GM12878 (cell line): ENCODE measurements at regions of chr5 and their contacts with region 1.

Region 1: GRCh38 chr5:160467555-160468362 is 46.1 kb downstream of the PTTG1 start:
- DNase-seq: peak; percentile 96
- ATAC-seq: peak; percentile 80
- H3K4me3 ChIP-seq: peak overlapping the region; percentile 88
- H3K27ac ChIP-seq: peak overlapping the region; percentile 96
- H3K4me1 ChIP-seq: peaks cover 35% of the 10 kb centered on the region
- H3K27me3 ChIP-seq: no peaks in the 10 kb centered on the region
- CTCF ChIP-seq: no peak
- EP300 ChIP-seq: peak; percentile 84 to 95
- POLR2A ChIP-seq: peak; percentile 91
- RAD21 ChIP-seq: peak; percentile 8; the same call in 1 of the 2 replicates

Region 2: GRCh38 chr5:159209438-159210305 is 1258.1 kb before region 1 on chr5 and contains the start of gene RNF145:
- CTCF ChIA-PET with region 1: no interaction called
- POLR2A ChIA-PET with region 1: no interaction called
- RAD21 ChIA-PET with region 1: no interaction called
- SMC1A ChIA-PET with region 1: no interaction called
- in situ Hi-C with region 1: no loop called
- intact Hi-C with region 1: loop called (anchors 10 kb)
- DNase-seq: peak; percentile 62
- ATAC-seq: peak; percentile 71
- H3K4me3 ChIP-seq: peak within 1 kb of the TSS; percentile 79
- H3K27ac ChIP-seq: peak within 1 kb of the TSS; percentile 83
- H3K4me1 ChIP-seq: peaks cover 9% of the 10 kb centered on the region
- H3K27me3 ChIP-seq: no peaks in the 10 kb centered on the region
- CTCF ChIP-seq: no peak
- EP300 ChIP-seq: no peak
- POLR2A ChIP-seq: peak; percentile 87
- RAD21 ChIP-seq: no peak
- polyA plus RNA-seq, gene RNF145: 18.6 to 25.2 TPM

Region 3: GRCh38 chr5:160418561-160419457 is 49.0 kb before region 1 on chr5 and contains the start of gene SLU7:
- CTCF ChIA-PET with region 1: interaction called, 9 read pairs
- POLR2A ChIA-PET with region 1: interaction called, 30 read pairs
- RAD21 ChIA-PET with region 1: interaction called, 68 read pairs
- SMC1A ChIA-PET with region 1: interaction called, 36 read pairs
- in situ Hi-C with region 1: no loop called
- intact Hi-C with region 1: no loop called
- DNase-seq: peak; percentile 91
- ATAC-seq: peak; percentile 80
- H3K4me3 ChIP-seq: peak within 1 kb of the TSS; percentile 72
- H3K27ac ChIP-seq: peak within 1 kb of the TSS; percentile 71
- H3K4me1 ChIP-seq: peaks cover 15% of the 10 kb centered on the region
- H3K27me3 ChIP-seq: no peaks in the 10 kb centered on the region
- CTCF ChIP-seq: no peak
- EP300 ChIP-seq: no peak; a peak in 1 of 4 replicates
- POLR2A ChIP-seq: peak; percentile 86
- RAD21 ChIP-seq: no peak
- polyA plus RNA-seq, gene SLU7: 40.9 to 41.2 TPM

Region 4: GRCh38 chr5:160445132-160445531 is 22.6 kb before region 1 on chr5:
- CTCF ChIA-PET with region 1: interaction called, 230 read pairs
- POLR2A ChIA-PET with region 1: interaction called, 156 read pairs
- RAD21 ChIA-PET with region 1: interaction called, 329 read pairs
- SMC1A ChIA-PET with region 1: interaction called, 511 read pairs
- in situ Hi-C with region 1: no loop called
- intact Hi-C with region 1: loop called (anchors 1 kb)
- DNase-seq: no peak
- ATAC-seq: peak; percentile 37
- H3K4me3 ChIP-seq: no peak overlapping the region
- H3K27ac ChIP-seq: no peak overlapping the region
- H3K4me1 ChIP-seq: peaks cover 62% of the 10 kb centered on the region
- H3K27me3 ChIP-seq: no peaks in the 10 kb centered on the region
- CTCF ChIP-seq: no peak
- EP300 ChIP-seq: peak in 1 of 2 experiments; percentile 39; a peak in 1 of 4 replicates
- POLR2A ChIP-seq: no peak
- RAD21 ChIP-seq: no peak

Region 5: GRCh38 chr5:160479926-160480325 is 12.2 kb after region 1 on chr5:
- CTCF ChIA-PET with region 1: interaction called, 6 read pairs
- POLR2A ChIA-PET with region 1: interaction called, 52 read pairs
- RAD21 ChIA-PET with region 1: interaction called, 19 read pairs
- SMC1A ChIA-PET with region 1: interaction called, 59 read pairs
- in situ Hi-C with region 1: no loop called
- intact Hi-C with region 1: no loop called
- DNase-seq: no peak
- ATAC-seq: peak; percentile 8; the same call in 2 of the 3 replicates
- H3K4me3 ChIP-seq: no peak overlapping the region
- H3K27ac ChIP-seq: no peak overlapping the region
- H3K4me1 ChIP-seq: peaks cover 13% of the 10 kb centered on the region; the same call in 1 of the 2 replicates
- H3K27me3 ChIP-seq: no peaks in the 10 kb centered on the region
- CTCF ChIP-seq: no peak
- EP300 ChIP-seq: no peak
- POLR2A ChIP-seq: no peak
- RAD21 ChIP-seq: no peak